KBM-7 (cell line): ENCODE measurements at regions of chr1 and their contacts with region 1.

Region 1: DNA sequence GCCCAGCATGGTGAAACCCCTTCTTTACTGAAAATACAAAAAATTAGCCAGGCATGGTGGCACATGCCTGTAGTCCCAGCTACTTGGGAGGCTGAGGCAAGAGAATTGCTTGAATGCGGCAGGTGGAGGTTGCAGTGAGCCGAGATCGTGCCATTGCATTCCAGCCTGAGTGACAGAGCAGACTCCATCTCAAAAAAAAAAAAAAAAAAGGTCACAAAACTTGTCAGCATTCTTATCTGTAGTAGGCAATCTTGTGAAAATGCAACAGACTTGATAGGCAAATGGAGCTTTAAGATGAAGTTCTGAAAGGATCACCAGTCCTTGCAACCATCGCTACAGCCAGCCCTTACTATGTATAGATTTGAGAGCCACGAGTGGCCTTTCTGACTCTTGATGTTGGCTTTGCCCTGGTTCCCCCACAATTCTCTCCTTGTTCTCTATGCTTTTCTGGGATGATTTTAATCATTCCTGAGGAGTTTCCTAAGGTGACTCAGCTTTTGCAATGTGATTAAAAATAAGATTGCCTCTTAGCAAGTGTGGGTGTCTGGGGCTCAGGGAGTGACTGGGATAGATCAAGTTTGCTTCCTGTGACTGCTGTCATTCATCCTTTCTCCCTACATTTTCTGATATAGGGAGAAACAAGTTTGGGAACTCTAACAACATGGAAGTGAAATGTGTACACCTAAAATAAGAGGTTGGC is 7.1 kb upstream of the MAP1LC3C start:
- DNase-seq: no peak

Region 2: GRCh38 chr1:241376701-241377100 is 629.3 kb before region 1 on chr1:
- in situ Hi-C with region 1: no loop called
- DNase-seq: no peak

Region 3: GRCh38 chr1:241895013-241895412 is 111.0 kb before region 1 on chr1:
- in situ Hi-C with region 1: loop called (anchors 10 kb)
- DNase-seq: peak; percentile 8

Region 4: DNA sequence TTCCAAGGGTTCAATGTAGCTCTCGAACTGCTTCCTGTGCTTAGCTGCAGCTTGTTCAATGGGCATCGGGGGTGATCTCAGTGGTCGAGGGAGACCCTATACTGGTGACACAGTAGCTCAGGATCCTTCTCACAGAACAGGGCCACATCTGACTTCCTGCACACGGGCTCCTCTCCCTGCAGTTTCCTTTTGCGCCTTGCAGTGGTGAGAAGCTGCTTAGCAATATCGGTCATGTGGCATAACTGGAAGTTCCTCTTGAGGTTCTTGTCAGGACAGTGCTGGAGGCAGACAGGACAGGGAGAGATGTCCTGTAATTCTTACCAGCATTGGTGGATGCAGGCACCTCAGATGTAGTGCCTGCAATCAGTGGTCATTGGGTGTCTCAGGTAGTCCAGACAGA is 133.4 kb after region 1 on chr1:
- in situ Hi-C with region 1: no loop called
- DNase-seq: peak; percentile 8